PC-3 (cell line): ENCODE measurements at regions of chr11 and their contacts with region 1.

Region 1: DNA sequence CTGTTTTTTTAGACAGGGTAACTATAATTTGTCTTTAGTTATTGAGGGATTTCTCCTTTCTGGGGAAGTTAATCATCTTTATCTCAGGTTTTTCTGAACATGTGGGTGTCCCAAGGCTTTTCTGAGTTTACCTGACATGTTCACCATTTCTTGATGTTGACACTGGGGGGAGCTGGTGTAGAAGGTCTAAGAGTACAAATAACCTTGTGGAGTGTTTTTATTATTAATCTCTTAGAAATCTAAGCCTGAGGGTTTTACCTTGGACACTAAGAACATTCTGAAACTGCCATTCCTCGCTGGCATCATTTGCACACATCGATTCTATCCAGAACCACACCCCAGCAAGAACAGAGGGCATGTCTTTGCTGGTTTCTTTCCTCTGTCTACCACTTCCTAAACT is 15.6 kb upstream of the C11orf91 start:
- DNase-seq: peak; percentile 65
- ATAC-seq: peak; percentile 58
- H3K4me3 ChIP-seq: no peak overlapping the region
- H3K27ac ChIP-seq: peak overlapping the region; percentile 85
- H3K4me1 ChIP-seq: peaks cover 57% of the 10 kb centered on the region
- H3K27me3 ChIP-seq: no peaks in the 10 kb centered on the region
- CTCF ChIP-seq: peak; percentile 59

Region 2: GRCh38 chr11:33700425-33701271 is 15.6 kb before region 1 on chr11 and contains the start of gene C11orf91:
- CTCF ChIA-PET with region 1: interaction called, 7 read pairs
- POLR2A ChIA-PET with region 1: interaction called, 16 read pairs
- intact Hi-C with region 1: no loop called
- DNase-seq: peak; percentile 93
- ATAC-seq: peak; percentile 45
- H3K4me3 ChIP-seq: peak within 1 kb of the TSS; percentile 61
- H3K27ac ChIP-seq: peak within 1 kb of the TSS; percentile 99
- H3K4me1 ChIP-seq: peaks cover 67% of the 10 kb centered on the region
- H3K27me3 ChIP-seq: no peaks in the 10 kb centered on the region
- CTCF ChIP-seq: no peak
- total RNA-seq, gene C11orf91: 1.0 TPM in 1 of 2 replicates, not detected in the other

Region 3: DNA sequence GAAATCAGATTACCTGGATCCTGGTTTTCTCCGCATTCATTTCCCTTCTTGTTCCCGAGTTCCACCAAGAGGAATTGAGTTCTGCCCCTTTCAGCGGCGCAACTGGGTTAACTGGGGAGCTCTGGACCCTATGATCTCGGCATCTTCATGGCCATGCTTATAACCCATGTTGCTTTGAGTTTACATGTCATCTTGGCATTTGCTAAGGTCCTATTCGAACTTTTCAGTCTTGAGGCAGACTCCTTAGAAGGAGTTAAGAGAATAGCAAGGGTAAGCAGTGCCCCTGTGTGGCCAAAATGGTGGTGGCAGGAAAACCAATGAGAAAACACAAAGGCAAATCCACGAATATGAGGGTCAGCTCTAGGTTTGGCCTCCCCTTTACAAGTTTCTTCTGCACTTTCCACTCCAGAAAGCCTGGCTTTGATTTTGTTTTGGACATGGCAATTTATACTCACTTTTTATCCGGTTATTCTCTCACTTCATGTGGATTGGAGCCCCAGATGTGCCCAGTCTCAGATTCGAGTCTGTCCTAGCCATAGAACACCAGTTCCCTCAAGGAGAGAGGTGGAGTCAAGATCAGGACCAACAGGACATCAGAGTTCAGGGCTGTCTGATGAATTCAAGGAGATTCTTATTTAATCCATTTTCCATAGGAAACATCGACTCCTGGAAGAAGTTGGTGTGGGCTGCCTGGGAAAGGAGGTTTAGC is 113.4 kb after region 1 on chr11:
- CTCF ChIA-PET with region 1: no interaction called
- POLR2A ChIA-PET with region 1: no interaction called
- intact Hi-C with region 1: loop called (anchors 1 kb)
- DNase-seq: peak; percentile 83
- ATAC-seq: peak; percentile 70
- H3K4me3 ChIP-seq: peak overlapping the region; percentile 70
- H3K27ac ChIP-seq: no peak overlapping the region
- H3K4me1 ChIP-seq: peaks cover 27% of the 10 kb centered on the region
- H3K27me3 ChIP-seq: no peaks in the 10 kb centered on the region
- CTCF ChIP-seq: peak; percentile 87